ENCODE measurements at regions of chr5 and their contacts with region 1.

Region 1: GRCh38 chr5:10635257-10635866 is 71.5 kb downstream of the ANKRD33B start:
- DNase-seq: peak; percentile 81
- ATAC-seq: peak; percentile 60
- H3K4me3 ChIP-seq: peak overlapping the region in 2 of 5 experiments; percentile 5 to 33
- H3K4me3 Mint-ChIP-seq: peak overlapping the region; percentile 78
- H3K27ac ChIP-seq: peak overlapping the region; percentile 65 to 95
- H3K27ac Mint-ChIP-seq: peak overlapping the region; percentile 99
- H3K4me1 ChIP-seq: peaks cover 58 to 68% of the 10 kb centered on the region in 2 donors
- H3K4me1 Mint-ChIP-seq: peaks cover 66% of the 10 kb centered on the region
- H3K27me3 ChIP-seq: no peaks in the 10 kb centered on the region
- H3K27me3 Mint-ChIP-seq: no peaks in the 10 kb centered on the region
- CTCF ChIP-seq: no peak

Region 2: GRCh38 chr5:10249948-10250803 is 385.2 kb before region 1 on chr5 and contains the start of gene CCT5:
- CTCF ChIA-PET with region 1: no interaction called
- POLR2A ChIA-PET with region 1: interaction called, 3 read pairs
- intact Hi-C with region 1: loop called (anchors 1 kb)
- DNase-seq: peak; percentile 98
- ATAC-seq: peak; percentile 82
- H3K4me3 ChIP-seq: peak within 1 kb of the TSS; percentile 79 to 98 (median 87)
- H3K4me3 Mint-ChIP-seq: peak within 1 kb of the TSS; percentile 99
- H3K27ac ChIP-seq: peak within 1 kb of the TSS; percentile 92 to 100
- H3K27ac Mint-ChIP-seq: peak within 1 kb of the TSS; percentile 100
- H3K4me1 ChIP-seq: peaks cover 27 to 29% of the 10 kb centered on the region in 2 donors
- H3K4me1 Mint-ChIP-seq: peaks cover 42% of the 10 kb centered on the region
- H3K27me3 ChIP-seq: no peaks in the 10 kb centered on the region
- H3K27me3 Mint-ChIP-seq: no peaks in the 10 kb centered on the region
- CTCF ChIP-seq: no peak
- total RNA-seq, gene CCT5: 74.3 and 95.7 TPM in 2 replicates

Region 3: GRCh38 chr5:10505517-10506095 is 129.8 kb before region 1 on chr5:
- CTCF ChIA-PET with region 1: no interaction called
- POLR2A ChIA-PET with region 1: no interaction called
- intact Hi-C with region 1: loop called (anchors 2 kb)
- DNase-seq: peak; percentile 84
- ATAC-seq: peak; percentile 94
- H3K4me3 ChIP-seq: no peak overlapping the region
- H3K4me3 Mint-ChIP-seq: no peak overlapping the region
- H3K27ac ChIP-seq: peak overlapping the region; percentile 27 to 32
- H3K27ac Mint-ChIP-seq: peak overlapping the region; percentile 65
- H3K4me1 ChIP-seq: peaks cover 15 to 16% of the 10 kb centered on the region in 2 donors
- H3K4me1 Mint-ChIP-seq: peaks cover 19% of the 10 kb centered on the region
- H3K27me3 ChIP-seq: no peaks in the 10 kb centered on the region
- H3K27me3 Mint-ChIP-seq: no peaks in the 10 kb centered on the region
- CTCF ChIP-seq: no peak

Region 4: GRCh38 chr5:10577371-10578292 is 57.7 kb before region 1 on chr5:
- CTCF ChIA-PET with region 1: interaction called, 4 read pairs
- POLR2A ChIA-PET with region 1: interaction called, 6 read pairs
- intact Hi-C with region 1: loop called (anchors 1 kb)
- DNase-seq: peak; percentile 12
- ATAC-seq: no peak
- H3K4me3 ChIP-seq: no peak overlapping the region
- H3K4me3 Mint-ChIP-seq: peak overlapping the region; percentile 52
- H3K27ac ChIP-seq: no peak overlapping the region
- H3K27ac Mint-ChIP-seq: peak overlapping the region; percentile 64
- H3K4me1 ChIP-seq: peaks cover 59 to 60% of the 10 kb centered on the region in 2 donors
- H3K4me1 Mint-ChIP-seq: peaks cover 81% of the 10 kb centered on the region
- H3K27me3 ChIP-seq: no peaks in the 10 kb centered on the region
- H3K27me3 Mint-ChIP-seq: no peaks in the 10 kb centered on the region
- CTCF ChIP-seq: no peak

Region 5: GRCh38 chr5:10671041-10672008 is 36.0 kb after region 1 on chr5:
- CTCF ChIA-PET with region 1: no interaction called
- POLR2A ChIA-PET with region 1: no interaction called
- intact Hi-C with region 1: no loop called
- DNase-seq: no peak
- ATAC-seq: no peak
- H3K4me3 ChIP-seq: no peak overlapping the region
- H3K4me3 Mint-ChIP-seq: no peak overlapping the region
- H3K27ac ChIP-seq: no peak overlapping the region
- H3K27ac Mint-ChIP-seq: no peak overlapping the region
- H3K4me1 ChIP-seq: no peaks in the 10 kb centered on the region
- H3K4me1 Mint-ChIP-seq: peaks cover 2% of the 10 kb centered on the region
- H3K27me3 ChIP-seq: no peaks in the 10 kb centered on the region
- H3K27me3 Mint-ChIP-seq: no peaks in the 10 kb centered on the region
- CTCF ChIP-seq: no peak

Region 6: GRCh38 chr5:10689391-10690081 is 54.2 kb after region 1 on chr5:
- CTCF ChIA-PET with region 1: interaction called, 10 read pairs
- POLR2A ChIA-PET with region 1: no interaction called
- intact Hi-C with region 1: no loop called
- DNase-seq: peak; percentile 34
- ATAC-seq: peak; percentile 49
- H3K4me3 ChIP-seq: no peak overlapping the region
- H3K4me3 Mint-ChIP-seq: no peak overlapping the region
- H3K27ac ChIP-seq: no peak overlapping the region
- H3K27ac Mint-ChIP-seq: peak overlapping the region; percentile 12
- H3K4me1 ChIP-seq: peaks cover 0 to 5% of the 10 kb centered on the region in 2 donors
- H3K4me1 Mint-ChIP-seq: peaks cover 12% of the 10 kb centered on the region
- H3K27me3 ChIP-seq: no peaks in the 10 kb centered on the region
- H3K27me3 Mint-ChIP-seq: no peaks in the 10 kb centered on the region
- CTCF ChIP-seq: no peak

Region 7: DNA sequence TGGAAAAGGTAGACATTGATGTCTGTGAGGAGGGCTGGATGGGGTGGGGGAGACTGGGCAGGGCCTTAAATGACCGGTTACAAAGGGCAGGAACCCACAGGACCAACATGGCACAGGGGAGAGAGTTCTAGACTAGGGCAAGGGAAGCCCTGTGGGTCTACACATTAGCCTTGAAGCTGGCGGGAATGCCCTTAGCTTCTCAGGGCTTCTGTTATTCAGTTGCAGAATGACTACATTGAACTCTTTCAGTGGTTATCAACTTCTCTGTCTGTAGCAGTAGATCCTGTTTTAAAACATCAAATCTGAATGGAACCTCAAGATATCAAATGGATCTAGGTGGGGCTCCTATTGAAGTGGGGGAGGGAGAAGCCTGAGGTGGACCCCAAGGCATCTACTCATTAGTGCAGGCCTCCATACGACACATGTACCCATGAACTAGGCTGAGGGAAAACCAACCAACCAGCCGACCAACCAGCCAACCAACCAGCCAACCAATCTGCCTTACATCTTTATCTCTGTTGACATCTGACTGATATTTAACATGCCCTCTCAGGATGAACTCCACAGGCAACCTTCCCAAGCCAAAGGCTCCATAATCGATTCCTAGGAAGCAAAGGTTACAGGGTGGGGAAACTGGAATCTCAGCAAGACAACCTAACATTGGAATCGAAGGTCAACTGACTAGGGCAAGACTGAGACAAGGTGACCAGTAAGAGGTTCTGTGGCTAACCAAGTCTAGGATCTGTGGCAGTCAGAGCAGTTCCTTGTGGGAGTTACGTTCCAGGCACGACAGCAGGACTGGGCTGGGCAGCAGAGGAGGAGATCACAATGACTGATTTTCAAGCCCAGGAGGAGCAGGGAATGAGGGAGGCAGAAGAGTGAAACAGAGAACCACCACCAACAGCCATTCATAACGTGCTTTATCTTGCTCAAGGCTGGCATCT is 77.5 kb after region 1 on chr5:
- CTCF ChIA-PET with region 1: no interaction called
- POLR2A ChIA-PET with region 1: no interaction called
- intact Hi-C with region 1: no loop called
- DNase-seq: no peak
- ATAC-seq: no peak
- H3K4me3 ChIP-seq: no peak overlapping the region
- H3K4me3 Mint-ChIP-seq: no peak overlapping the region
- H3K27ac ChIP-seq: no peak overlapping the region
- H3K27ac Mint-ChIP-seq: no peak overlapping the region
- H3K4me1 ChIP-seq: no peaks in the 10 kb centered on the region
- H3K4me1 Mint-ChIP-seq: peaks cover 2% of the 10 kb centered on the region
- H3K27me3 ChIP-seq: no peaks in the 10 kb centered on the region
- H3K27me3 Mint-ChIP-seq: no peaks in the 10 kb centered on the region
- CTCF ChIP-seq: no peak

Region 8: DNA sequence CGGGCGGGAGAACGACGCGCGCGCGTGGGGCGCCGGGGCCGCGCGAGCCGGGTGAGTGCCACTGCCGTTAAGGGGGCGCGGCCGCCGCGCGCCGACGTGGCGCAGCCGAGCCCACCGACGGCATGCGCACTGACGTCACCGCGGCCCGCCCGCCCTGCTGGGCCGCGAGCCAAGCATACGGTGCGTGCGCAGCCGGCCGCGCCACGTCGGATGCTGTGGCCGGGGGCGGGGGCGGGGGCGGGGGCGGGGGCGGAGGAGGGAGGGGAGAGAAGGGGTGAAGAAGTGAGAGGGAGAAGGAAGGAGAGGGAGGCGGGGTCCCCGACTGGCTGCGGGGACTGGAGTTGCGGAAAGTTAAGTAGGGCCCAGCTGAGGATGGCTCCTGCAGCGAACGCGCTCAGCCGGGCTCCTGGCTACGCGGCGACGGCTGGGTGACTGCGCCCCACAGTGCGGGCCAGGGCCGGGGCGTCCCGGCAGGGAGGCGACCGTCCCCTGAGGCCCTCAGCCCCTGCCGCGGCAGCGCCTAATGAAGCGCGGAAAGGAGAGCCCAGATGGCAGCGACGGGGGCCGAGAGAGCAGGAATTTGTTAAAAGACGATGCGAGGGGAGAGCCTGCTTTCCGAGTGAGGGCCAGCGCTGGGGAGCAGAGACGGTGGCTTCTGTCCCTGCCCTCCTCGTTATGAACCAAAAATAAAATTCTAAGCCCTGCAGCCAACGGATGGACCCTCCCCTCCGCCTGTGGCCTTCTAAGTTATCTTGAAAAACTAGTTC is 126.0 kb after region 1 on chr5 and contains the start of gene DAP:
- CTCF ChIA-PET with region 1: no interaction called
- POLR2A ChIA-PET with region 1: no interaction called
- intact Hi-C with region 1: loop called (anchors 1 kb)
- DNase-seq: peak; percentile 96
- ATAC-seq: peak; percentile 81
- H3K4me3 ChIP-seq: peak within 1 kb of the TSS; percentile 53 to 76 (median 68)
- H3K4me3 Mint-ChIP-seq: peak within 1 kb of the TSS; percentile 94
- H3K27ac ChIP-seq: peak within 1 kb of the TSS; percentile 92 to 93
- H3K27ac Mint-ChIP-seq: peak within 1 kb of the TSS; percentile 97
- H3K4me1 ChIP-seq: peaks cover 26 to 47% of the 10 kb centered on the region in 2 donors
- H3K4me1 Mint-ChIP-seq: peaks cover 51% of the 10 kb centered on the region
- H3K27me3 ChIP-seq: no peaks in the 10 kb centered on the region
- H3K27me3 Mint-ChIP-seq: no peaks in the 10 kb centered on the region
- CTCF ChIP-seq: no peak
- total RNA-seq, gene DAP: 49.2 and 49.8 TPM in 2 replicates

Region 9: GRCh38 chr5:11564706-11565105 is 929.3 kb after region 1 on chr5:
- CTCF ChIA-PET with region 1: no interaction called
- POLR2A ChIA-PET with region 1: no interaction called
- intact Hi-C with region 1: no loop called
- DNase-seq: no peak
- ATAC-seq: no peak
- H3K4me3 ChIP-seq: no peak overlapping the region
- H3K4me3 Mint-ChIP-seq: no peak overlapping the region
- H3K27ac ChIP-seq: no peak overlapping the region
- H3K27ac Mint-ChIP-seq: no peak overlapping the region
- H3K4me1 ChIP-seq: no peaks in the 10 kb centered on the region
- H3K4me1 Mint-ChIP-seq: no peaks in the 10 kb centered on the region
- H3K27me3 ChIP-seq: no peaks in the 10 kb centered on the region
- H3K27me3 Mint-ChIP-seq: no peaks in the 10 kb centered on the region
- CTCF ChIP-seq: no peak